Caki2 (cell line): ENCODE measurements at regions of chr2 and their contacts with region 1.

Region 1: DNA sequence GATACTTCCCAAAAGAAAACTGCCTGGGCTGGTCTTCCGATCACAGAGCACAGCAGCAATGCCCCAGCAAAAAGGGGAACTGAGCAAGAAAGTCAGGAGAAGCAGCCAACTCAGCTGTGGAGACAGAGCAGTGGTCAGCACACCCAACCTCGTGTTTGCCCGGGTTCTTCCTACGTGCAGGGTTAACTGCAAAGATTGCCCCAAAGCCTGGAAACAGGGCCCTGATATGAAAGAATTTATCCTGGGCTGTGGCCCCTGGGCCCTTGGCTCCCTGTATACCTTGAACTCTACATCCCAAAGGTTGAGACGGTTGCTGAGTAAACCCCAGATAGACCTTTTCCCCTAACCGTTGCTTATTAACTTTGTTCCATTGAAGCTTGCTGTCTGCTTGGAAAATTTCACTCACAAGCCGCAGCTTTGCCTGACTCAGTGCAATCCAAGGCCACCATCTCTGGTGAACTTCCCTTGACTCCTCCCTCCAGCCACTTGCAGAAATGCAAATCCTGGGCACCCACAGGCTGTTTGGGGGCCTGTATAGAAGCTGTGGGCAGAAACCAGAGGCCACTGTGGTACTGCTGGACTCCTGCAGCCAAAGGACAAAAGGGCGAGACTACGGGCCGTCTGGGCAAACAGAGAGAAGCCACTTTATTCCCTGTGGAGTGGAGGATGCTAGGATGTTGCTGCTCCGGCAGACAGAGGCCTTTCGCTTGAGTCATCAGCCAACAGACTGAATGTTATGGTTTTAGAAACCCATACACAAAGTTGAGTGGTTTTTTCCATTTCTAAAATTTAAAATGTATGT is 18.2 kb downstream of the NRP2 start:
- DNase-seq: peak; percentile 95

Region 2: GRCh38 chr2:205754924-205755321 is 54.4 kb after region 1 on chr2:
- in situ Hi-C with region 1: loop called (anchors 5 kb)
- DNase-seq: peak; percentile 95

Region 3: GRCh38 chr2:205975082-205975949 is 274.8 kb after region 1 on chr2:
- in situ Hi-C with region 1: no loop called
- DNase-seq: peak; percentile 89